ENCODE measurements at regions of chr20 and their contacts with region 1.

Region 1: DNA sequence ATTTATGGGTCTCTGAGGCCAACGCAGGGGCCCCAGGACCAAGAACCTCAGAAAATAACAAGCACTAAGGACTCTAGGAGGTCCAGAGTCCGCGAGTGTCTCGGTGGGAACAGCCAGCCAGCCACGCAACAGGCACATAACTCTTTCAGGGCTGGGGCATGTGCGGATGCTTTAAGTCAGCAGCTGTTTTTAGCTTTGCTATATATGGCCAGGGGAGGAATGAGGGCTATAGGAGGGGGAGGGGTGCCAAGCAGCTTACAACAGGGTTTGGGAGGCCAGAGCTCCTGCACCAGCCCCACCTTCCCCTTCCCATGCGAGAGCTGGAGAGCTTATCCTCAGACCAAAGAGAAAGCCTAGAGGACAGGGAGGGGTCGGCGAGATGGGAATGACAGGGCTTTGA is 6.2 kb downstream of the JPH2 start:
- DNase-seq: peak; percentile 80 to 95
- ATAC-seq: peak; percentile 59 to 72
- H3K4me3 ChIP-seq: peak overlapping the region; percentile 17 to 74 (median 30)
- H3K27ac ChIP-seq: peak overlapping the region; percentile 92 to 98 (median 96)
- H3K4me1 ChIP-seq: peaks cover 78 to 91% of the 10 kb centered on the region in 2 donors
- H3K27me3 ChIP-seq: no peaks in the 10 kb centered on the region
- CTCF ChIP-seq: no peak
- POLR2A ChIP-seq: peak; percentile 67 to 72

Region 2: GRCh38 chr20:44143936-44144335 is 36.9 kb before region 1 on chr20:
- in situ Hi-C with region 1: no loop called
- intact Hi-C with region 1: loop called (anchors 2 kb)
- DNase-seq: peak; percentile 69 to 77
- ATAC-seq: peak; percentile 78 to 91
- H3K4me3 ChIP-seq: peak overlapping the region in 2 of 4 donors; percentile 6 to 13
- H3K27ac ChIP-seq: peak overlapping the region; percentile 90 to 93 (median 92)
- H3K4me1 ChIP-seq: peaks cover 66 to 76% of the 10 kb centered on the region in 2 donors
- H3K27me3 ChIP-seq: no peaks in the 10 kb centered on the region
- CTCF ChIP-seq: no peak
- POLR2A ChIP-seq: peak; percentile 30 to 48

Measured in gastrocnemius medialis (tissue), 4 donors.